ENCODE measurements at regions of chr17 and their contacts with region 1.

Region 1: DNA sequence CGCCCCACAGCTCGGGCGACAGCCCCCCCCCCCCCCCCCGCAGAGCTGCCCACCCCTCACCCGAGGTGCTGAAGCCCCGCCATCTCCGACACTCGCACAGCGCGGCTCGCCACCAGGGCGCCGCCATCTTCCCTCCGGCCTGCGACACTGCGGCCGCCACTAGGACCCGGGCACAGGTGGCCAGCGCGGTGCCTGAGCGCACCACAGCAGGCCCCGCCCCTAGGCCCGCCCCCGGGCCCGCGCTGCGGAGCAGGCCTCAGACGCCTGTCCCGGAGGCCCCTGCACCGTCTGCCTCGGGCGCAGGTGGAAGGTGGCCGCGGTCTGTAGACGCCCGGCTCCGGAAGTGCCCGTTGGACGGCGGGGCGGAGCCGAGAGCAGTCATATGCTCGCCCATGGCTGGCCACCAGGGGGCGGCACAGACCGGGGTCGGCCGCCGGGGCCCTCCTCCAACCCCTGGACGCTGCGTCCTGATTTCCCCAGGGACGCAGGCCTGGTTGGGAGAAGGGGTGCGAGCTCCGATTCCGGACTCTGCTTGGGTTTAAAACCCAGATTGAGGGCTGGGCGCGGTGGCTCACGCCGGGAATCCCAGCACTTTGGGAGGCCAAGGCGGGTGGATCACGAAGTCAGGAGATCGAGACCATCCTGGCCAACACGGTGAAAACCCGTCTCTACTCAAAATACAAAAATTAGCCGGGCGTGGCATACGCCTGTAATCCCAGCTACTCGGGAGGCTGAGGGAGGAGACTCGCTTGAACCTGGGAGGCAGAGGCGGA is at the start of gene MRPL38:
- DNase-seq: peak; percentile 95 to 98 (median 97)
- H3K4me3 ChIP-seq: peak within 1 kb of the TSS; percentile 71 to 91 (median 87)
- H3K27ac ChIP-seq: peak within 1 kb of the TSS; percentile 77 to 80
- H3K4me1 ChIP-seq: peaks cover 0 to 31% (median 22%) of the 10 kb centered on the region in 4 experiments
- H3K27me3 ChIP-seq: no peaks in the 10 kb centered on the region

Region 2: DNA sequence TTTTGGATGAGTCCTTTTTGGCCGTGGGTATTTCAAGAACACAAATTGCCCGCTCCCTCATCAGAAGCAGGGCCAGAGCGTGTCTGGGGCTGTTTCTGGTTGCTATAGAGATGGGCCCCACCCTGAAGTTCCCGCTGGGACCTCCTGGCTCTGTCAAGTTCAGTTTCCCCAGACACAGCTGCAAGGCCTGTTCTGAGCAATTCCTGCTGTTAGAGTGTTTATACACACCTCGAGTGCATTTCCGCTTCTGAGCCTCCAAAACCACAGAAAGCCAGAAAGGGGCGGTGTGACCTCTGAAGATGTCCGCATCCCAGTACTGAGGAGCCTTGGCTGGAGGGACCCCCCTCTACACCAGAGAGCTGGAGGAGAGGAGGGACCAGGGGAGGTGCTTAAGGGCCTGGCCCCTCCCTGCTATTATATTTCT is 40.5 kb before region 1 on chr17:
- CTCF ChIA-PET with region 1: no interaction called
- POLR2A ChIA-PET with region 1: no interaction called
- DNase-seq: peak; percentile 73 to 91 (median 90)
- H3K4me3 ChIP-seq: peak overlapping the region in 3 of 7 experiments; percentile 13 to 38 (median 19)
- H3K27ac ChIP-seq: peak overlapping the region in 1 of 2 experiments; percentile 73
- H3K4me1 ChIP-seq: peaks cover 7 to 36% (median 26%) of the 10 kb centered on the region in 4 experiments
- H3K27me3 ChIP-seq: no peaks in the 10 kb centered on the region

Region 3: DNA sequence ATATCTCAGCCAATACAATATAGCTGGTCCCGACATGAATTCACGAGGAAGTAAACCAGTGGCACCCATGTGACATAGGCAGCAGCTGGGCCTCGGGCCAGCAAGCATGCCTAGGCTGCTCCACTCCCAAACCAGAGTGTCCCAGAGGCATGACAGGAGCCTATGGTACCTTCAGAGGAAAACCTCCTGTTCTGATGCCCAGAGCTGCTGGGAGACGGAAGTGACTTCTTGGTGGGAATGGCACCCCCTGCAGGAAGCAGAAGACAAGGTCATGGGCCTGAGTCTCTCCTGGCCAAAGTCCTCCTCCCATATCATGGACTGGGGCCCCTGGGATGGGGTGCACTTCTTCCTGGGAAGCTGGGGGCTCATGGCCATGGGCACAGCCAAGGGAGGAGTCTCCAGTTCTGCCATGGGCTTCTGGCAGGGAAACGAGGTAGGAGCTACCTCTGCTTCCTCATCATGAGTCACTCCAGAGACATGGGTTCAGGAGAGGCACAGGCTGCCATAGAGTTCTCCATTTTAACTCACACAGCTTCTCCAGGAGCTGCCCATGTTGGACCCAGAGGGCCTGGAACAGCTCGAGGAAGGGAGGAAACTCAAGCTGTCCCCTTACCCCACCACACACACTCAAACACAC is 22.5 kb after region 1 on chr17:
- CTCF ChIA-PET with region 1: interaction called, 52 read pairs
- POLR2A ChIA-PET with region 1: no interaction called
- DNase-seq: peak; percentile 40 to 54 (median 46)
- H3K4me3 ChIP-seq: no peak overlapping the region
- H3K27ac ChIP-seq: no peak overlapping the region
- H3K4me1 ChIP-seq: peaks cover 0 to 1% (median 0%) of the 10 kb centered on the region in 4 experiments
- H3K27me3 ChIP-seq: no peaks in the 10 kb centered on the region

Region 4: GRCh38 chr17:76000016-76000754 is 95.2 kb after region 1 on chr17:
- CTCF ChIA-PET with region 1: interaction called, 47 read pairs
- POLR2A ChIA-PET with region 1: interaction called, 3 read pairs
- DNase-seq: peak; percentile 54 to 73 (median 70)
- H3K4me3 ChIP-seq: no peak overlapping the region
- H3K27ac ChIP-seq: no peak overlapping the region
- H3K4me1 ChIP-seq: peaks cover 0 to 34% (median 18%) of the 10 kb centered on the region in 4 experiments
- H3K27me3 ChIP-seq: no peaks in the 10 kb centered on the region